ENCODE measurements at regions of chr17 and their contacts with region 1.

Region 1: DNA sequence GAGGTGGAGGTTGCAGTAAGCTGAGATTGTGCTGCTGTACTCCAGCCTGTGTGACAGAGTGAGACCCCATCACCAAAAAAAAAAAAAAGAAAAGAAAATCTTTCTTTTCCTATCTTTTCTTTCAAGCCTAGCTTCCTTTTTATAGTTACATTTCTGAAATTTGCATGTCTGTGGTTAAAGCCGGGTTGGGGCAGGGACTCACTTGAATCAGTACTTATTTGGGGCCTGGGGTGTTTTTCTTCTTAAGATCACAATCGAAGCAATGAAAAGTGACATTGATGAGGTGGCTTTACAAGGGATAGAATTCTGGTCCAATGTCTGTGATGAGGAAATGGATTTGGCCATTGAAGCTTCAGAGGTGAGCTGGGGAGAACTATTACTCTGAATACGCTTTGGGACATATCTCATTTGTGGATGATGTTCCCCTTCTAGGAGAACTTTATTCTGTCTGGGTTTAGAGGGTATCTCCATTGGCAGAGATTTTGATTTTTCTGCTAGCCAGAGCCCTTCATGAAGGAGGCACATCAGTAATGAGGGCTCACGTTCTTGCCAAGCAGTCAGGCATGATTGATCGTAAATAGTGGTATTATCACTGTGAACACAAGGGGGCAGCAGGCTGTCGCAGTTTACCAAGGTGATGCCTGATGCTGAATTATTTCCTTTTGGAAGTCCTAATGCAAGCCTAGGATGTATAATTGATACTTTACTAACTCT is 14.3 kb downstream of the KPNB1 start:
- DNase-seq: peak; percentile 89
- H3K4me3 Mint-ChIP-seq: peak overlapping the region; percentile 15
- H3K27ac Mint-ChIP-seq: peak overlapping the region; percentile 77
- H3K4me1 Mint-ChIP-seq: peaks cover 35% of the 10 kb centered on the region
- H3K27me3 Mint-ChIP-seq: no peaks in the 10 kb centered on the region

Region 2: GRCh38 chr17:47246120-47246519 is 417.9 kb before region 1 on chr17:
- intact Hi-C with region 1: no loop called
- DNase-seq: no peak
- H3K4me3 Mint-ChIP-seq: no peak overlapping the region
- H3K27ac Mint-ChIP-seq: no peak overlapping the region
- H3K4me1 Mint-ChIP-seq: no peaks in the 10 kb centered on the region
- H3K27me3 Mint-ChIP-seq: peaks cover 52% of the 10 kb centered on the region

Region 3: GRCh38 chr17:47650525-47651522 is 13.2 kb before region 1 on chr17:
- intact Hi-C with region 1: loop called (anchors 1 kb)
- DNase-seq: peak; percentile 98
- H3K4me3 Mint-ChIP-seq: peak overlapping the region; percentile 92
- H3K27ac Mint-ChIP-seq: peak overlapping the region; percentile 90
- H3K4me1 Mint-ChIP-seq: peaks cover 53% of the 10 kb centered on the region
- H3K27me3 Mint-ChIP-seq: no peaks in the 10 kb centered on the region

Region 4: DNA sequence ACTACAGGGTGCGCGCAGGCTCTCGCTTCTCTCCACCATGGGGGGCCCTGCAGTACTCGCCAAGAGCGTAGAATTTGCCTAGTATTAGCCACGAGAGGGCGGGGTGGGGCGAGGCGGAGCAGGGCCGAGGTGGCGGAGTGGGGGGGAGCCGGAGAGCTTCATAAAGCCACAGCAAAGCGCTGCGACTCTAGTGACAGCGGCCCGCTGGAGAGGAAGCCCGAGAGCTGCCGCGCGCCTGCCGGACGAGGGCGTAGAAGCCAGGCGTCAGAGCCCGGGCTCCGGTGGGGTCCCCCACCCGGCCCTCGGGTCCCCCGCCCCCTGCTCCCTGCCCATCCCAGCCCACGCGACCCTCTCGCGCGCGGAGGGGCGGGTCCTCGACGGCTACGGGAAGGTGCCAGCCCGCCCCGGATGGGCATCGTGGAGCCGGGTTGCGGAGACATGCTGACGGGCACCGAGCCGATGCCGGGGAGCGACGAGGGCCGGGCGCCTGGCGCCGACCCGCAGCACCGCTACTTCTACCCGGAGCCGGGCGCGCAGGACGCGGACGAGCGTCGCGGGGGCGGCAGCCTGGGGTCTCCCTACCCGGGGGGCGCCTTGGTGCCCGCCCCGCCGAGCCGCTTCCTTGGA is 69.1 kb after region 1 on chr17 and contains the start of gene TBX21:
- intact Hi-C with region 1: loop called (anchors 5 kb)
- DNase-seq: peak; percentile 96
- H3K4me3 Mint-ChIP-seq: peak within 1 kb of the TSS; percentile 94
- H3K27ac Mint-ChIP-seq: peak within 1 kb of the TSS; percentile 93
- H3K4me1 Mint-ChIP-seq: peaks cover 69% of the 10 kb centered on the region
- H3K27me3 Mint-ChIP-seq: no peaks in the 10 kb centered on the region
- total RNA-seq, gene TBX21: 63.0 and 66.4 TPM in 2 replicates

Region 5: GRCh38 chr17:47802341-47803022 is 138.4 kb after region 1 on chr17:
- intact Hi-C with region 1: loop called (anchors 1 kb)
- DNase-seq: peak; percentile 87
- H3K4me3 Mint-ChIP-seq: no peak overlapping the region
- H3K27ac Mint-ChIP-seq: no peak overlapping the region
- H3K4me1 Mint-ChIP-seq: peaks cover 3% of the 10 kb centered on the region
- H3K27me3 Mint-ChIP-seq: peaks cover 5% of the 10 kb centered on the region

Measured in activated CD4-positive, alpha-beta T cell treated with anti-CD3 and anti-CD28 coated beads, Interleukin-2, amount 10 ng/mL, durations not matched to agents 24 days and 14 days (primary cell).